PC-3 (cell line): ENCODE measurements at regions of chr19 and their contacts with region 1.

Region 1: GRCh38 chr19:43337737-43338136 is 15.7 kb upstream of the CD177 start:
- DNase-seq: no peak
- ATAC-seq: no peak
- H3K4me3 ChIP-seq: no peak overlapping the region
- H3K27ac ChIP-seq: no peak overlapping the region
- H3K4me1 ChIP-seq: peaks cover 13% of the 10 kb centered on the region; the same call in 1 of the 2 replicates
- H3K27me3 ChIP-seq: no peaks in the 10 kb centered on the region
- CTCF ChIP-seq: no peak

Region 2: DNA sequence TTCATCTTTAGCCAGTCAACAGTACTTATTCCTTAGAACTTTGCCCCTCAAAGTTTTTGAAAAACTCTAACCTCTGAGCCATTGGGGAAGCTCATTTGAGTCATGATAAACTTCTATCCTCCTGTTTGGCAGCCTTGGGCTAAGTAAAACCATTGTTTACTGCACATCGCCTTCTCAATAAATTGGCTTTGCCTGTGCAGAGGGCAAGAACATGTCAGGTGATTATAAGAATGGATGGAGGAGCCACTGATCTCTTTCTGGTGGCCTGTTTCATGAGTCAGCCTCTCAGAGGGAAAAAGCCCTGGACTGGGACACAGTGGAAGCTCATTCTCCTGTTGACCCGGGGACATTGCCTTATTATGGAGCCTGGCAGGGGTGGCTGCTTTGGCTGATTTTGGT is 112.9 kb before region 1 on chr19:
- CTCF ChIA-PET with region 1: no interaction called
- POLR2A ChIA-PET with region 1: no interaction called
- intact Hi-C with region 1: no loop called
- DNase-seq: no peak
- ATAC-seq: no peak
- H3K4me3 ChIP-seq: no peak overlapping the region
- H3K27ac ChIP-seq: no peak overlapping the region
- H3K4me1 ChIP-seq: no peaks in the 10 kb centered on the region
- H3K27me3 ChIP-seq: no peaks in the 10 kb centered on the region
- CTCF ChIP-seq: no peak

Region 3: DNA sequence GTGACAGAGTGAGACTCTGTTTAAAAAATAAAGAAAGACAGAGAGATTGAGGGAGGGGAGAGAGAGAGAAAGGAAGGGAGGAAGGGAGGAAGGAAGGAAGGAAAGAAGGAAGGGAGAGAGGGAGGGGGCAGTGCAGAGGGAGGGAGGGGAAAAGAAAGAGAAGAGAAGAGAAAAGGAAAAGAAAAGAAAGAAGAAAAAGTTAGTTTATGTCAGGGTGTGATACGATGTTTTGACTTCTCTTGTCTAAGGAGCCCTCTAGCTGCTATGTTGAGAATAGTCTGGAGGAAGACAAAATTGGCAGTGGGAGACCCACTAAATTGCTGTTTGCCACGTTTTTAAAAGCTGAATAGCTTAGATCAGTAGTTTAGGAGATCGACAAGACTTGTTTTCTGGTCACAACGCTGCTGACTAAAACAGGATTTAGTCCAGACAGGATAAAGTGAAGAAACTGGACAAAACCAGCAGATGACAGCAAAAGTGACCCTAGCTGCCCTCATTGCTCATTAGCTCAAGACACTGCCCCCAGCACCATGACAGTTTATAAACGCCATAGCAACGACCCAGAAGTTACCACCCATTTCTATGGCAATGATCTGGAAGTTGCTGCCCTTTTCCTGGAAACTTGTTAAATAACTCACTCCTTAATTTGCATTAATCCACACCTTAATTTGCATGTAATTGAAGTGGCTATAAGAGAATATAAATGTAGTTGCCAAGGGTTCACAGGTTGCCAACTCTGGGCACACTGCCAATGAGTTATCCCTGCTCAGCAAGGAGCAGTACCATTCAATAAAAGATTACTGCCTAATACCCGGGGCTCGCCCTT is 88.0 kb after region 1 on chr19:
- CTCF ChIA-PET with region 1: no interaction called
- POLR2A ChIA-PET with region 1: no interaction called
- intact Hi-C with region 1: loop called (anchors 5 kb)
- DNase-seq: peak; percentile 49
- ATAC-seq: peak; percentile 48
- H3K4me3 ChIP-seq: peak overlapping the region; percentile 25; the same call in 1 of the 2 replicates
- H3K27ac ChIP-seq: no peak overlapping the region
- H3K4me1 ChIP-seq: peaks cover 25% of the 10 kb centered on the region
- H3K27me3 ChIP-seq: no peaks in the 10 kb centered on the region
- CTCF ChIP-seq: peak; percentile 63